GM12878 (cell line): ENCODE measurements at regions of chr5 and their contacts with region 1.

Region 1: GRCh38 chr5:138352071-138352721 is at the start of gene KDM3B:
- DNase-seq: peak; percentile 55
- ATAC-seq: peak; percentile 77
- H3K4me3 ChIP-seq: peak within 1 kb of the TSS; percentile 99
- H3K27ac ChIP-seq: peak within 1 kb of the TSS; percentile 93
- H3K4me1 ChIP-seq: peaks cover 3% of the 10 kb centered on the region
- H3K27me3 ChIP-seq: no peaks in the 10 kb centered on the region
- CTCF ChIP-seq: peak; percentile 99 to 100 (median 99)
- EP300 ChIP-seq: no peak
- POLR2A ChIP-seq: no peak
- RAD21 ChIP-seq: peak; percentile 53
- polyA plus RNA-seq, gene KDM3B: 8.5 to 9.6 TPM

Region 2: GRCh38 chr5:138331449-138332368 is 20.5 kb before region 1 on chr5 and contains the start of gene CDC25C:
- CTCF ChIA-PET with region 1: interaction called, 266 read pairs
- POLR2A ChIA-PET with region 1: interaction called, 143 read pairs
- RAD21 ChIA-PET with region 1: interaction called, 22 read pairs
- SMC1A ChIA-PET with region 1: interaction called, 102 read pairs
- in situ Hi-C with region 1: no loop called
- intact Hi-C with region 1: no loop called
- DNase-seq: peak; percentile 96
- ATAC-seq: peak; percentile 100
- H3K4me3 ChIP-seq: peak within 1 kb of the TSS; percentile 95
- H3K27ac ChIP-seq: peak within 1 kb of the TSS; percentile 43
- H3K4me1 ChIP-seq: no peaks in the 10 kb centered on the region; the same call in 1 of the 2 replicates
- H3K27me3 ChIP-seq: no peaks in the 10 kb centered on the region
- CTCF ChIP-seq: no peak
- EP300 ChIP-seq: no peak
- POLR2A ChIP-seq: peak; percentile 86
- RAD21 ChIP-seq: no peak
- polyA plus RNA-seq, gene CDC25C: 14.0 to 14.3 TPM

Region 3: DNA sequence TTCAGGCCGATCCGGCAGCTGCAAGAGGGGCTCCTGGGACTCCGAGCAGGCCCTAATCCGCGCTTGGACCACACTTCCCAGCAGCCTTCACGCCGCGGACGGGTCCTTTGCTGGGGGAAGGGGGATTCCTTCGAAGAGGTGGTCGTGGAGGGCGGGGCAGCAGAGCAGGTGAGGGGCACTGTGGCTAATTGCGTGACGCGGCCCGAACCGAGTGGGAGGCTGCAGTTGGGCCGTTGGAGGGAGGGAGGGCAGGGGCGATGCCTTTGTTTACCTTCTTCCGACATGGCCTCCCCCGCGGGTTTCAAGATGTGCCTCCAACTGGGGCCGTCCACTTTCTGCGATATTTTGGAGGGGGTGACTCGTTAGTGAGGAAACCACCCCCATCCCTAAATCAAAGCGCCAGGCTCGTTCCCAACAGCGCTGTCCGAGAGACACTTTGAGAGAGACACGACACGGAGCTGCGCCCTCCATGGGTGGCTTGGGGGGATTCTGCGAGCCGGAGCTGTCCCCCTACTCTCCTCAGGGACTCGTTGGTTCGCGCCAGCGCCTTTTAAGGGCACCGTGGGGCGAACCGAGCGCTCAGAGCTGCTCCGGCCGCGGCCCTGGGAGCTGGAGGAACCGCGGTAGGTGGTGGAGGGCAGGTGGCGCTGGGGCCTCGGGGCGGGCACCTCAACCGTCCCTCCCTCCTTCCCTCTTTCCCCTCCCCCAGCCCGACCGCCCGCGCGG is 14.3 kb before region 1 on chr5 and contains the start of gene FAM53C:
- CTCF ChIA-PET with region 1: interaction called, 266 read pairs
- POLR2A ChIA-PET with region 1: interaction called, 143 read pairs
- RAD21 ChIA-PET with region 1: interaction called, 22 read pairs
- SMC1A ChIA-PET with region 1: interaction called, 102 read pairs
- in situ Hi-C with region 1: no loop called
- intact Hi-C with region 1: loop called (anchors 1 kb)
- DNase-seq: peak; percentile 79
- ATAC-seq: peak; percentile 94
- H3K4me3 ChIP-seq: peak within 1 kb of the TSS; percentile 90
- H3K27ac ChIP-seq: peak within 1 kb of the TSS; percentile 96
- H3K4me1 ChIP-seq: no peaks in the 10 kb centered on the region
- H3K27me3 ChIP-seq: no peaks in the 10 kb centered on the region
- CTCF ChIP-seq: no peak
- EP300 ChIP-seq: peak; percentile 3 to 58; a peak in 1 of 4 replicates
- POLR2A ChIP-seq: peak; percentile 100
- RAD21 ChIP-seq: no peak
- polyA plus RNA-seq, gene FAM53C: 8.0 to 8.8 TPM

Region 4: GRCh38 chr5:138369706-138370105 is 17.5 kb after region 1 on chr5:
- CTCF ChIA-PET with region 1: interaction called, 64 read pairs
- POLR2A ChIA-PET with region 1: interaction called, 13 read pairs
- RAD21 ChIA-PET with region 1: interaction called, 3 read pairs
- SMC1A ChIA-PET with region 1: interaction called, 36 read pairs
- in situ Hi-C with region 1: no loop called
- intact Hi-C with region 1: no loop called
- DNase-seq: no peak
- ATAC-seq: peak; percentile 49
- H3K4me3 ChIP-seq: no peak overlapping the region
- H3K27ac ChIP-seq: peak overlapping the region; percentile 29
- H3K4me1 ChIP-seq: peaks cover 19% of the 10 kb centered on the region; the same call in 1 of the 2 replicates
- H3K27me3 ChIP-seq: no peaks in the 10 kb centered on the region
- CTCF ChIP-seq: no peak
- EP300 ChIP-seq: no peak
- POLR2A ChIP-seq: no peak
- RAD21 ChIP-seq: no peak

Region 5: GRCh38 chr5:138408023-138408422 is 55.8 kb after region 1 on chr5:
- CTCF ChIA-PET with region 1: interaction called, 17 read pairs
- POLR2A ChIA-PET with region 1: interaction called, 9 read pairs
- RAD21 ChIA-PET with region 1: interaction called, 4 read pairs
- SMC1A ChIA-PET with region 1: interaction called, 18 read pairs
- in situ Hi-C with region 1: no loop called
- intact Hi-C with region 1: no loop called
- DNase-seq: peak; percentile 42
- ATAC-seq: peak; percentile 97
- H3K4me3 ChIP-seq: no peak overlapping the region
- H3K27ac ChIP-seq: peak overlapping the region; percentile 52
- H3K4me1 ChIP-seq: peaks cover 6% of the 10 kb centered on the region; the same call in 1 of the 2 replicates
- H3K27me3 ChIP-seq: no peaks in the 10 kb centered on the region
- CTCF ChIP-seq: no peak; a peak in 1 of 6 replicates
- EP300 ChIP-seq: no peak
- POLR2A ChIP-seq: no peak
- RAD21 ChIP-seq: no peak

Region 6: DNA sequence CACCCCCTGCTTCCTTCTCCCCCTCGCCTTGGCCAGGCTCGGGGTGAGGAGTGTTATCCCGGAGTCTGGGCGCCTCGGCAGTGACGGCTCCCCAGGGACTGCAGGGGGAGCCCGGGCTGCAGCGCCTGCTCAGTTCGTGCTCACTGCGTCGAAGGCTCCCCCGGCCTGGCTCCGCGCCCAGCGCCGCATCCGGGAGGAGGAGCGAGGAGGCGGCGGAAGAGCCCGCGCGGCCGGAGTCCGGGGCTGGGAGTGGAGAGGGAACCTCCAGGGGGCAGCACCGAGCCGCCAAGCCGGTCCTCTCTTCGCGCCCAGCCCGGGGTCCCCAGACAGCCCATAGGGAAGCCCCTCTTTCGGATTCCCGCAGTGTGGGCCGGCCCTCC is 111.8 kb after region 1 on chr5:
- CTCF ChIA-PET with region 1: interaction called, 13 read pairs
- POLR2A ChIA-PET with region 1: interaction called, 14 read pairs
- RAD21 ChIA-PET with region 1: no interaction called
- SMC1A ChIA-PET with region 1: no interaction called
- in situ Hi-C with region 1: no loop called
- intact Hi-C with region 1: no loop called
- DNase-seq: peak; percentile 76
- ATAC-seq: peak; percentile 71
- H3K4me3 ChIP-seq: peak overlapping the region; percentile 80
- H3K27ac ChIP-seq: peak overlapping the region; percentile 98
- H3K4me1 ChIP-seq: peaks cover 19% of the 10 kb centered on the region
- H3K27me3 ChIP-seq: peaks cover 0 to 6% of the 10 kb centered on the region in 2 experiments; a peak in 1 of 4 replicates
- CTCF ChIP-seq: peak; percentile 79 to 81 (median 80)
- EP300 ChIP-seq: no peak
- POLR2A ChIP-seq: peak; percentile 80
- RAD21 ChIP-seq: peak; percentile 29; the same call in 1 of the 2 replicates

Region 7: DNA sequence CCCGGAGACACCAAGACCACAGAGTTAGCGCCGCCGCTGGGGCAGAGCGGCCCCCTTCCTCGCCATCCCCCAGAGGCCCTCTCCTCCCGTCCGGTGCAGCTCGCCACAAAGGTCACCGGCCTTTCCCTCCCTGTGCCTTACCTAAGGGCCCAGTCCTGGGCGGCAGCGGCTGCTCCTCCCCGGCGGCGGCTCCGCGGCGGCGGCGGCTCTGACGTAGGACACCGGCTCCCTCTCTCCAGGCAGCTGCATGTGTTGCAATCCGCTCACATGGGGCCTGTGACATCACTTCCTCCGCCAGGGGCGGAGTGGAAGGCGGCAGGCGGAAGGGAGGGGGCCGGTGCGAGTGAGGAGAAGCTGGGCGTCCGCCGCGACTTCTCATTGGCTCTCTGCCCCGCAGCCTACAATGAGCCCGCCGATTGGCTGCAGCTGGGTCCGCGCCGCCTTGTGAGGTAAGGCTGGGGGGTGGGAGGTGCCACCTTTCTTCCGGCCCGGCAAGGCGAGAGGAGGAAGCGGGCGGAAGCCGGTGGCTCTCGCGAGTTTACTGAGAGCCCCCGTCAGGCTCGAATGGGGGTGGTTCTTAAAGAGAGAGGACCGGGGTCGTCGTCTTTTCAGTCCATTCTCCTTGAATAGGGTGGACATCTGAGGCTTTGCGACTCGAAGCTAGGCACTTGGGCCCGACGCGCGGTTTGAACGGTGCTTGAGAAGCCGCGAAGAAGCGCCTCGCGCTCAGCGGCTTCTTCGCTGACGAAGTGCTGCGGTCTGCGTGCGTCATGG is 190.9 kb after region 1 on chr5 and contains the start of gene ETF1:
- CTCF ChIA-PET with region 1: interaction called, 13 read pairs
- POLR2A ChIA-PET with region 1: interaction called, 8 read pairs
- RAD21 ChIA-PET with region 1: no interaction called
- SMC1A ChIA-PET with region 1: no interaction called
- in situ Hi-C with region 1: no loop called
- intact Hi-C with region 1: no loop called
- DNase-seq: peak; percentile 97
- ATAC-seq: peak; percentile 92
- H3K4me3 ChIP-seq: peak within 1 kb of the TSS; percentile 99
- H3K27ac ChIP-seq: peak within 1 kb of the TSS; percentile 100
- H3K4me1 ChIP-seq: peaks cover 17% of the 10 kb centered on the region
- H3K27me3 ChIP-seq: no peaks in the 10 kb centered on the region
- CTCF ChIP-seq: no peak
- EP300 ChIP-seq: 0 out of 4 replicates have a peak, but pooled peaks have one; percentile 6 to 7
- POLR2A ChIP-seq: peak; percentile 86
- RAD21 ChIP-seq: no peak
- polyA plus RNA-seq, gene ETF1: 29.8 to 44.9 TPM

Region 8: DNA sequence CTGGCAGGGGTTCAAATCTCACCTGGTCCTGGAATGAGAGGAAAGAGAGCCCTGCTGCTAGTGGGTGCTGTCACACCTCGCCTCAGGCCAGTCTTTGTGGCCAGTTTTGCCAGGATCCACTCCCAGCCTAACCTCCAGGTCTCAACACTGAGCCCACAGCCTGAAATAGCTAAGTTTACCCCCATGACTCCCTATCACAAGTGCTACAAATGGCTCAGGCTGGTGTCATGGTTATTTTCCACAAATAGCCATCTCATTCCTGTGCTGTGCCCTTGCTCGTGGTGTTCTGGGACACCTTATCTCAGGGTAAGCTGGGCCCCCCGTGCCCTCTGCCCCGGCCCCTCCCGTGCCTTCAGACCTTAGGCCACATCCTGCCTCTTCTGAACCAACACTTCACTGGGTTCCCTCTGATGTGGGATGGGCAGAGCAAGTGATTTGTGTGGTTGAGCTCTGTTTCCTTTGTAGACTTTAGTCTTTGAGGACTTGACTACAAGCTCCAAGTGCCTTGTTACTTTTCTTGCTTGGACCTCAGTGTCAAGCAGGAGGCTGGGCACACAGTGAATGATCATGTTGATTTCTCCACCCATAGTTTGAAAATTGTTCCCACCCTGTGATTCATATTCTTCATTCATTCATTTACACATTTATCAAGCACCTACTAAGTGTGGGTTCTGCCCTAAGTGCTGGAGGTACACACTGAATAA is 316.3 kb after region 1 on chr5:
- CTCF ChIA-PET with region 1: no interaction called
- POLR2A ChIA-PET with region 1: no interaction called
- RAD21 ChIA-PET with region 1: no interaction called
- SMC1A ChIA-PET with region 1: no interaction called
- in situ Hi-C with region 1: no loop called
- intact Hi-C with region 1: no loop called
- DNase-seq: no peak
- ATAC-seq: peak; percentile 64
- H3K4me3 ChIP-seq: no peak overlapping the region
- H3K27ac ChIP-seq: no peak overlapping the region
- H3K4me1 ChIP-seq: peaks cover under 1% of the 10 kb centered on the region; the same call in 1 of the 2 replicates
- H3K27me3 ChIP-seq: no peaks in the 10 kb centered on the region
- CTCF ChIP-seq: no peak
- EP300 ChIP-seq: no peak
- POLR2A ChIP-seq: no peak
- RAD21 ChIP-seq: no peak